ENCODE measurements at regions of chr5 and their contacts with region 1.

Region 1: GRCh38 chr5:142012792-142013388 is at the start of gene GNPDA1:
- DNase-seq: no peak
- ATAC-seq: peak; percentile 82
- H3K4me3 ChIP-seq: peak within 1 kb of the TSS; percentile 66
- H3K27ac ChIP-seq: no peak within 1 kb of the TSS
- H3K4me1 ChIP-seq: peaks cover 18% of the 10 kb centered on the region
- H3K27me3 ChIP-seq: peaks cover 0 to 2% of the 10 kb centered on the region in 2 experiments; a peak in 1 of 4 replicates
- CTCF ChIP-seq: no peak; a peak in 1 of 6 replicates
- EP300 ChIP-seq: no peak
- POLR2A ChIP-seq: peak; percentile 74
- RAD21 ChIP-seq: no peak
- polyA plus RNA-seq, gene GNPDA1: 5.8 to 11.9 TPM

Region 2: DNA sequence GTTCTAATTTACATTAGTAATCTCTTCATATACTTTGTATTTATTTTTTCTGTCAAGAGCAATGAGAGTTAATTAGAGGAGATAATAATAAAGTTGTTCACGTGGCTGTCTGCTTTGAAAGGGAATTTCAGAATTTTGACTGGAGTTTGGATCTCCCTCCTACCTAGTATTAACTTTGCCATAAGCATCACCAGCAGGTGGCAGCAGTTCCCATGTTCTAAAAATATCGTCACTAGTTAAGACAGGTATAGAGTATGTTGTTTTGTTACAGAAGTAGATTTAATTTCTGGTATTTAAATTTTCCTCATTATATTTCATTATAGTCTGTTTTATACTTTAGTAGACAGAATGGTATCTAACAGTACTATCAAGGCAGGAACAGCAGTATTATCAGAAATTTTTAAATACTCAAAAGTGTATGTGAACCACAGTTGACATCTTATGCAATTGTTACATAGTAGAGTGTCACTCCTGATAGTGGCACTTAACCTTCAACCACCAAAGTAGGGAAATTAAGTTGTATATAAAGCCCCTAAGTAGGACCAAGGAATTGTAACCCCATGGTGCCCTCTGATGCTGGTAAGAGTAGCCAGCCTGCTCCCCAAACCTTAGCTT is 20.4 kb before region 1 on chr5:
- CTCF ChIA-PET with region 1: interaction called, 120 read pairs
- POLR2A ChIA-PET with region 1: interaction called, 3 read pairs
- RAD21 ChIA-PET with region 1: interaction called, 25 read pairs
- SMC1A ChIA-PET with region 1: interaction called, 67 read pairs
- in situ Hi-C with region 1: no loop called
- intact Hi-C with region 1: loop called (anchors 2 kb)
- DNase-seq: no peak
- ATAC-seq: peak; percentile 83
- H3K4me3 ChIP-seq: no peak overlapping the region
- H3K27ac ChIP-seq: no peak overlapping the region
- H3K4me1 ChIP-seq: no peaks in the 10 kb centered on the region
- H3K27me3 ChIP-seq: no peaks in the 10 kb centered on the region
- CTCF ChIP-seq: peak; percentile 60 to 71 (median 64)
- EP300 ChIP-seq: no peak
- POLR2A ChIP-seq: no peak
- RAD21 ChIP-seq: peak; percentile 64

Region 3: DNA sequence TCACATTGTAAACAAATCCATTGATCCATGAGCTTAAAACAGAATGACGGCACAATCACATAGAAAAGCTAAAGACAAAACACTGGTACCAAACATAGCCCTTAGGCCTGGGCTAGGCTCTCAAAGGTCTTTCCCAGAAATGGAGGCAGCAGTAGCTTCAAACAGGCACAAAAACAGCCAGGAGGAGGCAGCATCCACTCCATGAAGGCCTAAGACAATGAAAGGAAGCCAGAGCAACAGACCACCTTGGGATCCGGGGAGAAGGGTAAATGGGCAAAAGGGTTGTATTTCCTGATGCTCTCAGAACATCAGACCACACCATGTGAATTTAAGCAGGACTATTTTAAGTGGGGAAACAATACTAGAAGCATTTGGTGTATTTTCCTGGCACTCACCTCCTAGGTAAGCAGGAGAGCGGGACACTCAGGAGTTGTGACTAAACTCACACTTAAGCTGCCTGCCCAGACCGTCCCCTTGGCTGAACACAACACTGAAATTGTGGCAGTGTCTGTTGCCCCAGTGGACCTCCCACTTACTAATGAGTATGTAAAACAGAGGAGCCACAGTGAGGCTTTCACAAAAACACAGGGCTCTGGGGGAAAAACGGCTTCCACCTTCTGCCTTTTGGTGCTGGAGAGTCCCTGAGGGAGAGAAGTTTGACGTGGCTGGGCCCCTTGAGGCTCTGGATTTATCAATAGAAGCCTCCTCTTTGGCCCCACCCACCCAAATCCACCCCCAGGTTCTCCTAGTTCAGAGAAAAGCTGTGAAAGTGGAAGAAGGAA is 12.0 kb before region 1 on chr5:
- CTCF ChIA-PET with region 1: interaction called, 68 read pairs
- POLR2A ChIA-PET with region 1: interaction called, 3 read pairs
- RAD21 ChIA-PET with region 1: interaction called, 3 read pairs
- SMC1A ChIA-PET with region 1: interaction called, 6 read pairs
- in situ Hi-C with region 1: no loop called
- intact Hi-C with region 1: no loop called
- DNase-seq: no peak
- ATAC-seq: peak; percentile 54
- H3K4me3 ChIP-seq: no peak overlapping the region
- H3K27ac ChIP-seq: no peak overlapping the region
- H3K4me1 ChIP-seq: peaks cover 1% of the 10 kb centered on the region; the same call in 1 of the 2 replicates
- H3K27me3 ChIP-seq: no peaks in the 10 kb centered on the region
- CTCF ChIP-seq: peak; percentile 14 to 28 (median 22); a peak in 3 of 6 replicates
- EP300 ChIP-seq: no peak
- POLR2A ChIP-seq: no peak
- RAD21 ChIP-seq: no peak

Region 4: DNA sequence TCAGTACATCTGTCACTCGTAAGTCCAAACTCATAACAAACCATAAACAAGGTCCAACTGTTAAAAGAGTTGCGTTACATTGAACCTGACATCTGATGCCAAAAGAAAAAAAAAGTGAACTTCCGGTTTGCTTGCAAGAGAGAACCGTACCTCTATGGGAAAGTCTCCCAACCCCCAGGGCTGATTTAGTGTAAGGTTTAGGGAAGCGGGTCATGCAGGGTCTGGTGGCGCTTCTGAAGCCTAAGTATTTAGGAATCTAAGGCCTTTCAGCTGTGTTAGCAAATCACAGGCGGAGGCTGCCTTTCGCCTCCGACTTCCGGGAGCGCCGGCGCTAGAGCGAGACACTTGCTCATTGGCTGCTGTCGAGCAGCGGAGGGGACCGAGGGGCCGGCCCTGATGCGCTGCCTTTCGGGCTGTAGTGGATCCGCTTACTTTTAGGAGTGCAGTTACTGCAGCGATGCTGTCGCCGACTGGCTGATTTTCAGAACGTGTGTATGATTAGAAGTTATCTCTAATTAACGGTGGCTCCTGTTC is 11.9 kb after region 1 on chr5:
- CTCF ChIA-PET with region 1: interaction called, 22 read pairs
- POLR2A ChIA-PET with region 1: no interaction called
- RAD21 ChIA-PET with region 1: interaction called, 4 read pairs
- SMC1A ChIA-PET with region 1: interaction called, 7 read pairs
- in situ Hi-C with region 1: no loop called
- intact Hi-C with region 1: no loop called
- DNase-seq: peak; percentile 30
- ATAC-seq: peak; percentile 99
- H3K4me3 ChIP-seq: peak overlapping the region; percentile 58
- H3K27ac ChIP-seq: no peak overlapping the region
- H3K4me1 ChIP-seq: no peaks in the 10 kb centered on the region; the same call in 1 of the 2 replicates
- H3K27me3 ChIP-seq: no peaks in the 10 kb centered on the region; a peak in 1 of 4 replicates
- CTCF ChIP-seq: no peak
- EP300 ChIP-seq: no peak
- POLR2A ChIP-seq: no peak
- RAD21 ChIP-seq: no peak

Region 5: GRCh38 chr5:142046191-142046590 is 33.3 kb after region 1 on chr5:
- CTCF ChIA-PET with region 1: no interaction called
- POLR2A ChIA-PET with region 1: no interaction called
- RAD21 ChIA-PET with region 1: no interaction called
- SMC1A ChIA-PET with region 1: no interaction called
- in situ Hi-C with region 1: no loop called
- intact Hi-C with region 1: no loop called
- DNase-seq: no peak
- ATAC-seq: no peak
- H3K4me3 ChIP-seq: no peak overlapping the region
- H3K27ac ChIP-seq: no peak overlapping the region
- H3K4me1 ChIP-seq: no peaks in the 10 kb centered on the region
- H3K27me3 ChIP-seq: no peaks in the 10 kb centered on the region; a peak in 2 of 4 replicates
- CTCF ChIP-seq: no peak
- EP300 ChIP-seq: no peak
- POLR2A ChIP-seq: no peak
- RAD21 ChIP-seq: no peak

Region 6: GRCh38 chr5:142108432-142109330 is 95.8 kb after region 1 on chr5 and contains the start of gene NDFIP1:
- CTCF ChIA-PET with region 1: no interaction called
- POLR2A ChIA-PET with region 1: no interaction called
- RAD21 ChIA-PET with region 1: no interaction called
- SMC1A ChIA-PET with region 1: no interaction called
- in situ Hi-C with region 1: no loop called
- intact Hi-C with region 1: loop called (anchors 5 kb)
- DNase-seq: no peak
- ATAC-seq: peak; percentile 99
- H3K4me3 ChIP-seq: peak within 1 kb of the TSS; percentile 52; the same call in 1 of the 2 replicates
- H3K27ac ChIP-seq: no peak within 1 kb of the TSS
- H3K4me1 ChIP-seq: peaks cover 11% of the 10 kb centered on the region
- H3K27me3 ChIP-seq: peaks cover 0 to 12% of the 10 kb centered on the region in 2 experiments
- CTCF ChIP-seq: no peak
- EP300 ChIP-seq: no peak
- POLR2A ChIP-seq: peak; percentile 85
- RAD21 ChIP-seq: no peak
- polyA plus RNA-seq, gene NDFIP1: 0.08 to 0.37 TPM

Region 7: DNA sequence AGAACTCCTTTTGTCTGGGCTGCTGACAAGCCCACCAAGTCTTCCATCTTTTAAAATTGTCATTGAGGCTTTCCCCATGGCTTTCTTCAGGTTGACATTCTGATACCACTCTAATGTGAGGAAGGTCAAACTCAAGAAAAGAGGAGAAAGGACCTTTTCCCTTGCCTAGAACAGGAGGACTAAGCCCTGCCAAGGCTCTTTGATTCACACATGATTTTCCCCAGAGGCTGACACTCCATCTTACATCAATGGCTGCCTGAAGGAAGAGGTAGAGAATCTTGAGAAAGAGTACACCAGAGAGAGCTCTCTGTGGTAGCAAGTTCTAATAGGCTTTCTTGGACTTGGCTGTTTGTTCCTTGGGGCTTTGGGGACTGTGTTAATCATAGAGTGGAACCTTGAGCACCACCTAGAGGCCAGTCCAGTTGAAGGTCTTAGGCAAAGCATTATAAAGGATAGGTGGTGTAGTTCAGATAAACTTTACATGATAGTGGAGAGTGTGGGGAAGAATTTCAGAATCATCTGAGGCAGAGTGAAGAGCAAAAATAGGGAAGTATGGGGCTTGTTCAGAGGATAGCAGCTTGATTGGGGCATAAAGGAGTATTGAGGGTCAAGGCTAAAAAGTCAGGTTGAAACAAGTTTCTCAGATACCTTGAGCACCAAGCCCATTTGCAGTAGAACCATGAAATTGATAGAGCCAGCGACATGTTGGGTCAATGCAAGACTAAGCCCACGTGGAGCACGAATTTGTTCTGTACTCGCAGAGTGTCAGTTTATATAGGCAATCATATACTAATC is 132.4 kb after region 1 on chr5:
- CTCF ChIA-PET with region 1: interaction called, 12 read pairs
- POLR2A ChIA-PET with region 1: interaction called, 4 read pairs
- RAD21 ChIA-PET with region 1: interaction called, 3 read pairs
- SMC1A ChIA-PET with region 1: interaction called, 12 read pairs
- in situ Hi-C with region 1: no loop called
- intact Hi-C with region 1: loop called (anchors 5 kb)
- DNase-seq: peak; percentile 11
- ATAC-seq: peak; percentile 96
- H3K4me3 ChIP-seq: no peak overlapping the region
- H3K27ac ChIP-seq: no peak overlapping the region
- H3K4me1 ChIP-seq: no peaks in the 10 kb centered on the region
- H3K27me3 ChIP-seq: no peaks in the 10 kb centered on the region
- CTCF ChIP-seq: peak; percentile 66 to 79 (median 70)
- EP300 ChIP-seq: no peak
- POLR2A ChIP-seq: no peak
- RAD21 ChIP-seq: peak; percentile 54

Measured in GM12878 (cell line).